Cardiac septum (tissue), 1 donor: ENCODE measurements at regions of chr2 and their contacts with region 1.

Region 1: GRCh38 chr2:230068016-230068650 is 591 bp downstream of the SLC16A14 start:
- DNase-seq: no peak

Region 2: DNA sequence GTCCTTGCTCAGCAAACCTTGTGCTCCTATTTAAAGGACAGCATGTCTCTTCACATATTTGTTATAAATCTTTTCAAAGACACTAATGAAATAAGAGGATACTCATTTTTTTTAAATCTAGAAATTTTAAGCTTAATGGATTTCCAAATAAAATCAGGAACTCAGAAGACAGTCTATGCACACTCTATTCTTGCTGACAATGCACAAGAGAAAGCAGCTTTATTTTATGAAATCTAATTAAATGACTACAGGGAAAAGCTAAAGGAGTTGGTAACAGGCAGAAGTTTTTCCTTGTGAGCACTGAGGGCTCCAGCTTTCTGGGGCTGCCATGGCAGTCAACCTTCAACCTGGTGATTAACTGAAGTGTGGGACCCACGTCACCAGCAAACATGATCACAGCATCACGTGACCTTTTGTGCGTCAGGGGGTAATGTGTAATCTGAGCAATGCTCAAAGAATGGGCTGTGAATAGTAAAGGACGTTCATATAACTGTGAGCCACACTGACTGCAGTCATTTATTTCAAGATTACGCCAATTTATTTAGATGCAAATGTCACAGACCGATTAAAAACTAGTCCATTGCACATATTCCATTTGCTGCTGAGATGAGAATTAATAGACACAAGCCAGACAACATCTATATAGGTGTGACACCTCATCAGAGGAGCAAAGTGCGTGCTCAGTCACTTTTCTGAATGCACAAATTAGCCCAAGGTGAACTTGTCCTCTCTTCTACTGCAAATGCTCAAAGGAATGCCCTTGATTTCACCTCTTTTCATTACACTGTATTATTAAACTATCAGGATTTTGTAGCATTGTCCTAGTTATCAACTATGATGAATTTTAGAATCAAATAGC is 342.2 kb before region 1 on chr2:
- intact Hi-C with region 1: no loop called
- DNase-seq: no peak

Region 3: GRCh38 chr2:230130668-230131364 is 62.7 kb after region 1 on chr2:
- intact Hi-C with region 1: loop called (anchors 2 kb)
- DNase-seq: peak; percentile 83

Region 4: GRCh38 chr2:230160112-230160660 is 92.1 kb after region 1 on chr2:
- intact Hi-C with region 1: loop called (anchors 2 kb)
- DNase-seq: no peak

Region 5: DNA sequence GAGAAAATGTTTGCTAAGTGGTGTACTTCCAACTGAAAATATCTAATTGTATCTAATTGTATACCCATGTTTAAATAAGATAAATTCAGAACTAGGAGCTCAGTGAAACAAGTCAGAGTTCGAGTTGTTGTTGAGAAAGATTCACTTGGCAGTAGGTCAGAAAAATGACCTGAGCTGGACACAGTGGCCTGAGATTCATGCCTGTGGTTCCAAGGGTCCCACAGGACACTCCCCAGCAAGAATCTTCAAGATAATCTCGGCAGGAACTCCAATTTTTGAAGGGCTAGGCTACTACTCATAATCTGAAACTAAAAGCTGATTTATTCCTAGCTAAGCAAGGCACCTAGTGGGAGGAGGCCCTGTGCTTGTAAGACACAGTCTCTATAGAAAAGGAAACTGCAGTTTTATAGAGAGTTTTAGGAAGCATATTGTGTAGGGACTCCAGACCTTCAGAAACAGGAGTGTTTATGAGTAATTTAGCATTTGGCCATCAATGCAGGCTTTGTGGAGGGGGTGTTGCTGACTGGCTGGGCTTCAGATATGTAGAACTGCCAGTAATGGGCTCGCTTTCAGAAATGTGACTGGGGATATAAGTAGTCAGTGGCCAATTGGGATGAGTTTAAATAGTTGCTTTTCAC is 200.6 kb after region 1 on chr2:
- intact Hi-C with region 1: no loop called
- DNase-seq: no peak

Region 6: GRCh38 chr2:230614913-230615332 is 546.8 kb after region 1 on chr2:
- intact Hi-C with region 1: loop called (anchors 5 kb)
- DNase-seq: no peak